ENCODE measurements at regions of chrX and their contacts with region 1.

Region 1: DNA sequence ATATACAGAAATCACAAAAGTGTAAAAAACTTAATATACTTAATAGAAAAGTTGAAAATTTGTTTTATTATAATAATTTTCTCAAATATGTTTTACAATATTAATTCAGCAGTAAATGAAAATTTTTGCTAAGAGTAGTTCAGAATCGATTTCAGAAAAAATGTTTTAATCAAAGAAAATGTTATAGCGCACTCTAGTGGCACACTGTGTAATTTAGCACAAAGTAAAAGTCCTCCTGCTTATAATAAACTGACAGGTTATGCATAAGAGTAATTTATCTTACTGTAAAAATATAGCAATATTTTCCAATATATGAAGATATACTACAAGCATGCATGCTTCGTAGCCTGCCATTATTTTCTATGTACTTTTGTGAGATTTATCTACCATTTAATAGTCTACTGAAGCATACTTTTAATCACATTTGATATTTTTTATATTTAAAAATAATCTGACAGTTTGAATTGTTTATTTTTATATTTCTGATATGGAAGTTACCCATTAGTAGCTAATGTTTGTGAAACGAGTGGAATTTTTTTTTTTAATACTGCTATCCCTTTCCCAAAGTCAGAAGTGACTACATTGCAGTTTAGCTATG is 217.9 kb upstream of the KLHL4 start:
- DNase-seq: peak; percentile 12
- H3K4me3 ChIP-seq: no peak overlapping the region
- H3K27ac ChIP-seq: no peak overlapping the region
- H3K4me1 ChIP-seq: no peaks in the 10 kb centered on the region
- H3K27me3 ChIP-seq: no peaks in the 10 kb centered on the region
- CTCF ChIP-seq: peak in 1 of 2 donors; percentile 13
- POLR2A ChIP-seq: no peak

Region 2: GRCh38 chrX:85611926-85612325 is 1687.7 kb before region 1 on chrX:
- CTCF ChIA-PET with region 1: no interaction called
- POLR2A ChIA-PET with region 1: no interaction called
- dilution Hi-C with region 1: no loop called
- intact Hi-C with region 1: loop called (anchors 5 kb)
- DNase-seq: peak; percentile 1
- H3K4me3 ChIP-seq: no peak overlapping the region
- H3K27ac ChIP-seq: no peak overlapping the region
- H3K4me1 ChIP-seq: no peaks in the 10 kb centered on the region
- H3K27me3 ChIP-seq: no peaks in the 10 kb centered on the region
- CTCF ChIP-seq: no peak
- POLR2A ChIP-seq: no peak

Region 3: GRCh38 chrX:86133761-86134160 is 1165.9 kb before region 1 on chrX:
- CTCF ChIA-PET with region 1: no interaction called
- POLR2A ChIA-PET with region 1: no interaction called
- dilution Hi-C with region 1: no loop called
- intact Hi-C with region 1: loop called (anchors 5 kb)
- DNase-seq: peak; percentile 4
- H3K4me3 ChIP-seq: no peak overlapping the region
- H3K27ac ChIP-seq: no peak overlapping the region
- H3K4me1 ChIP-seq: no peaks in the 10 kb centered on the region
- H3K27me3 ChIP-seq: no peaks in the 10 kb centered on the region
- CTCF ChIP-seq: peak in 1 of 2 donors; percentile 24
- POLR2A ChIP-seq: no peak

Region 4: DNA sequence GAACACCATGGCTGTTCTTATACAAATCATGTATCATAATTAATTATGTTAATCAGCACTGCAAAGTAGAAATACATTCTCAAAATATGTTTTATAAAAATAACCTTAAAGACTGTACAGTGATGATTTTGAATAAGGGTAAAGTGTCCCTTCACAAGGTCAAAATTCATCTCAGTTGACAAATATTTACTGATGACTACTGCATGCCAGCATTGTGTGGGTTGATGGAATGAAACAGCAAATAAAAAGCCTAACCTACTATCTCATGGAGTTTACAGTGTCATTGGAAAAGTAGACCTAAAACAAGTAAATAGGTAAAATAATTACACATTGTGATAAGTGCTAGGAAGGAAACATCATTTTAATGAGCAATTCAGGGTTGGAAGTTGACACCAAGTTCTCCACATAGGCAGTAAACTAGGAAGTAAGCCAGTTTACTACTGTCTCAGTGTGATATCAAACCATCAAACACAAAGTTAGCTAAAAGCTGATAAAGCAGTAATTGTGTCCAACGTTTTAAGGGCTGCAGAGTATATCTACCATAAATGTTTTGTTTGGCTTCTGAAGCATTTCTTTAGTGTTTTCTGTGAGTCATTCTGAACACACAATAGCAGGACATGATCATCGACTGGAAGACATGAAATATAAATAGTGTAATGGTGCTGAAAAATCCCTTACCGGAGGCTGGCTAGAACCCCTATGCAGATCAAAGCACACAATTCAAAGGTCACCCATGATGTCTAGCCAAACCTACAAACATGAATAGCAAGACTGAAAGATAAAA is 929.6 kb before region 1 on chrX:
- CTCF ChIA-PET with region 1: no interaction called
- POLR2A ChIA-PET with region 1: no interaction called
- dilution Hi-C with region 1: no loop called
- intact Hi-C with region 1: no loop called
- DNase-seq: peak; percentile 85
- H3K4me3 ChIP-seq: no peak overlapping the region
- H3K27ac ChIP-seq: peak overlapping the region; percentile 45
- H3K4me1 ChIP-seq: peaks cover 8% of the 10 kb centered on the region
- H3K27me3 ChIP-seq: no peaks in the 10 kb centered on the region
- CTCF ChIP-seq: no peak
- POLR2A ChIP-seq: no peak

Region 5: DNA sequence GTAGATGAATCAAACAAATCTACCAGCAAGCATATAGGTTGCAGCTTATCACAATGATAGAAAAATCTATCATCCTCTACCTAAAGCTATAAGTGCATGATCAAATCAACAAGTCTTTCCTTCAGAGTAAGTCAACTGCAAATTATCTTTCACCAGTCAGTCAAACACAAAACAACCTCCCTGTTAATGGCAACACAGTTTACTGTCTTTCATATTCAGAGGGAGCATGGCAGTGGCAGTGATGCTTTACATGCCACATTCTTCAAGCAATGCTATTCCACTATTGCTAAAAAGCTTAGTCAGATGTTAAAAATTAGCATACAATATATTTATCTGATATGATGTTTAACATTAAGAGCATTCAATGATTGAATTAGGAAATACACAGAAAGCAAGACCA is 27.2 kb before region 1 on chrX:
- CTCF ChIA-PET with region 1: no interaction called
- POLR2A ChIA-PET with region 1: no interaction called
- dilution Hi-C with region 1: no loop called
- intact Hi-C with region 1: no loop called
- DNase-seq: no peak
- H3K4me3 ChIP-seq: no peak overlapping the region
- H3K27ac ChIP-seq: no peak overlapping the region
- H3K4me1 ChIP-seq: no peaks in the 10 kb centered on the region
- H3K27me3 ChIP-seq: no peaks in the 10 kb centered on the region
- CTCF ChIP-seq: no peak
- POLR2A ChIP-seq: no peak

Region 6: GRCh38 chrX:87489071-87489470 is 189.4 kb after region 1 on chrX:
- CTCF ChIA-PET with region 1: no interaction called
- POLR2A ChIA-PET with region 1: no interaction called
- dilution Hi-C with region 1: no loop called
- intact Hi-C with region 1: no loop called
- DNase-seq: peak; percentile 47
- H3K4me3 ChIP-seq: no peak overlapping the region
- H3K27ac ChIP-seq: no peak overlapping the region
- H3K4me1 ChIP-seq: no peaks in the 10 kb centered on the region
- H3K27me3 ChIP-seq: no peaks in the 10 kb centered on the region
- CTCF ChIP-seq: no peak
- POLR2A ChIP-seq: no peak

Measured in endothelial cell of umbilical vein (primary cell).